K562 (cell line): ENCODE measurements at regions of chr1 and their contacts with region 1.

Region 1: GRCh38 chr1:45011837-45012638 is at the start of gene UROD:
- DNase-seq: peak; percentile 95 to 100 (median 96)
- ATAC-seq: peak; percentile 73
- H3K4me3 ChIP-seq: peak within 1 kb of the TSS; percentile 86
- H3K27ac ChIP-seq: peak within 1 kb of the TSS; percentile 85
- H3K4me1 ChIP-seq: peaks cover 44 to 45% of the 10 kb centered on the region in 2 experiments
- H3K27me3 ChIP-seq: no peaks in the 10 kb centered on the region
- CTCF ChIP-seq: no peak
- EP300 ChIP-seq: peak; percentile 72; the same call in 1 of the 2 replicates
- POLR2A ChIP-seq: peak; percentile 98
- RAD21 ChIP-seq: peak in 1 of 2 experiments; percentile 5; a peak in 1 of 4 replicates
- polyA plus RNA-seq, gene UROD: 2,545 to 2,933 TPM

Region 2: DNA sequence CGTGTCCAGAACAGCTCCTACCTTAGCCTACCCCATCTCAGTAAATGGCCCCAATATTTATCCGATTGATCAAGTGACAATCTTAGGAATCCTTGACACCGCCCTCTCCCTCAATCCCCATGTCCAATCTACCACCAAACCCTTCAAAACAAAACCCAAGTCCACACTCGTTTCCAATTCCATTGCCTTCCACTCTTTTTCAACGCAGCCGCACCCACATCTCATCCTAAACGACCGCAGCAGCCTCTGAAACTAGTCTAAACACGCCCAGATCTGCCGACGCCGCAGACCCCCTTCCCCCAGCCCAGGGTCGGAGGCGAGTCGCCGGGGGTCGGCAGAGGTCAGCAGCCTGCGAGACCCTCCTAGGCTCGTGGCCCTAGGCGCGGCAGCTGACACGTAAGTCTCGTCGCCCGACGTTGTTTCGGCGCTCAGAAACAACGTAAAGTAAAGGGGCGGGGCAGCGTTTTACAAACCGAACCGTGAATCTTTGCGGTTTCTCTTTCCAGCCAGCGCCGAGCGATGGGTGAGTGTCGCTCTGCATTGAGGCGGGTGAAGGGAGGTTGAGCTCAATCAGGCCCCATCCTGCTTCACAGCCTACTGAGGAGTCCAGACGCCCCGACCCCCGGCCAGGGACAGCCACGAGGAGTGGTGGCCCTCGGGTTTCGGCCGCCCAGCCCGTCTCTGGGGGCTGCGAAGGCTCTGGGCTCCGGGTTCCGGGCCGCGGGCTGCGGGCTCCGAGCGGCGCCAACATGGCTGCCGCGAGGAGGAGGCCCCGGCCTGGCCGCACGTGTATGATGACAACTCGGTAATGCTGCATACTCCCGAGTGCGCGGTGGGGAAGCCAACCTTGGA is 236.7 kb before region 1 on chr1 and contains the start of gene RPS8:
- CTCF ChIA-PET with region 1: no interaction called
- POLR2A ChIA-PET with region 1: interaction called, 27 read pairs
- in situ Hi-C with region 1: no loop called
- intact Hi-C with region 1: no loop called
- DNase-seq: peak; percentile 85 to 99 (median 89)
- ATAC-seq: peak; percentile 81
- H3K4me3 ChIP-seq: peak within 1 kb of the TSS; percentile 75
- H3K27ac ChIP-seq: peak within 1 kb of the TSS; percentile 98
- H3K4me1 ChIP-seq: peaks cover 13 to 22% of the 10 kb centered on the region in 2 experiments
- H3K27me3 ChIP-seq: no peaks in the 10 kb centered on the region
- CTCF ChIP-seq: 0 out of 6 replicates have a peak, but pooled peaks of 1 of the 3 experiments have one; percentile 2
- EP300 ChIP-seq: peak; percentile 44; the same call in 1 of the 2 replicates
- POLR2A ChIP-seq: peak; percentile 100
- RAD21 ChIP-seq: no peak
- polyA plus RNA-seq, gene RPS8: 2,431 to 2,562 TPM

Region 3: GRCh38 chr1:44807262-44808062 is 204.6 kb before region 1 on chr1 and contains the start of gene DYNLT4:
- CTCF ChIA-PET with region 1: no interaction called
- POLR2A ChIA-PET with region 1: interaction called, 13 read pairs
- in situ Hi-C with region 1: no loop called
- intact Hi-C with region 1: loop called (anchors 1 kb)
- DNase-seq: peak; percentile 86 to 99 (median 90)
- ATAC-seq: peak; percentile 84
- H3K4me3 ChIP-seq: peak within 1 kb of the TSS; percentile 30; the same call in 1 of the 2 replicates
- H3K27ac ChIP-seq: peak within 1 kb of the TSS; percentile 100
- H3K4me1 ChIP-seq: peaks cover 59 to 72% of the 10 kb centered on the region in 2 experiments
- H3K27me3 ChIP-seq: no peaks in the 10 kb centered on the region
- CTCF ChIP-seq: peak in 1 of 3 experiments; percentile 0; a peak in 1 of 6 replicates
- EP300 ChIP-seq: peak; percentile 71; the same call in 1 of the 2 replicates
- POLR2A ChIP-seq: peak; percentile 88
- RAD21 ChIP-seq: peak; percentile 9 to 20; a peak in 3 of 4 replicates
- polyA plus RNA-seq, gene DYNLT4: not detected

Region 4: GRCh38 chr1:44862829-44863401 is 149.1 kb before region 1 on chr1:
- CTCF ChIA-PET with region 1: no interaction called
- POLR2A ChIA-PET with region 1: no interaction called
- in situ Hi-C with region 1: no loop called
- intact Hi-C with region 1: no loop called
- DNase-seq: peak in 2 of 4 experiments; percentile 58 to 65
- ATAC-seq: peak; percentile 84
- H3K4me3 ChIP-seq: no peak overlapping the region
- H3K27ac ChIP-seq: peak overlapping the region; percentile 45; the same call in 2 of the 3 replicates
- H3K4me1 ChIP-seq: peaks cover 0 to 9% of the 10 kb centered on the region in 2 experiments; a peak in 2 of 5 replicates
- H3K27me3 ChIP-seq: no peaks in the 10 kb centered on the region
- CTCF ChIP-seq: no peak
- EP300 ChIP-seq: no peak
- POLR2A ChIP-seq: no peak
- RAD21 ChIP-seq: no peak

Region 5: DNA sequence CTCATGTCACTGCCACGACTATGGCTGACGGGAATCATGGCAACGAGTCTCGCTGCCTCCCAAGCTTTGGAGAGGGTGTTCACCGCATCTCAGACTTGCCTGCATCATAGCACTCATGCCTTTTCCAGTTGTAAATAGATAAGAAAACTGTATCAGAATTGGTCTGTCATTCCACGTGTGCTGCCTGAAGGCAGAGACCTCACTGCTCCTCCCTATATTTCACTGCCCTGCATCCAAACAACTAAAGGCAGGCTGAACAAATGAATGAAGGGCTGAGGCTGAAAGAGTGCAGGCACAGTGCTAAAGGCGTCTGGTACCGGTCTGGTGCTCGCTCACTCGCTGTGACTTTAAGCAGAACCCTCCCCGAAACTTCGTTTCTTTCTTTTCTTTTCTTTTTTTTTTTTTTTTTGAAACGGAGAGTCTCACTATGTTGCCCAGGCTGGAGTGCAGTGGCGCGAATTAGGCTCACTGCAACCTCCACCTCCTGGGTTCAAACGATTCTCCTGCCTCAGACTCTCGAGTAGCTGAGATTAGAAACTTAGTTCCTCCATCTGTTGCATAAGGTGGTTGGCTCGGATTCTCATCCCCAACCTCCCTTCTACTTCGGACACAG is 26.2 kb before region 1 on chr1:
- CTCF ChIA-PET with region 1: no interaction called
- POLR2A ChIA-PET with region 1: interaction called, 54 read pairs
- in situ Hi-C with region 1: no loop called
- intact Hi-C with region 1: loop called (anchors 1 kb)
- DNase-seq: peak in 3 of 4 experiments; percentile 31 to 57 (median 38)
- ATAC-seq: peak; percentile 35
- H3K4me3 ChIP-seq: peak overlapping the region; percentile 65
- H3K27ac ChIP-seq: peak overlapping the region; percentile 70
- H3K4me1 ChIP-seq: peaks cover 10 to 15% of the 10 kb centered on the region in 2 experiments; a peak in 4 of 5 replicates
- H3K27me3 ChIP-seq: no peaks in the 10 kb centered on the region
- CTCF ChIP-seq: no peak
- EP300 ChIP-seq: no peak
- POLR2A ChIP-seq: no peak
- RAD21 ChIP-seq: 0 out of 4 replicates have a peak, but pooled peaks of 1 of the 2 experiments have one; percentile 4

Region 6: DNA sequence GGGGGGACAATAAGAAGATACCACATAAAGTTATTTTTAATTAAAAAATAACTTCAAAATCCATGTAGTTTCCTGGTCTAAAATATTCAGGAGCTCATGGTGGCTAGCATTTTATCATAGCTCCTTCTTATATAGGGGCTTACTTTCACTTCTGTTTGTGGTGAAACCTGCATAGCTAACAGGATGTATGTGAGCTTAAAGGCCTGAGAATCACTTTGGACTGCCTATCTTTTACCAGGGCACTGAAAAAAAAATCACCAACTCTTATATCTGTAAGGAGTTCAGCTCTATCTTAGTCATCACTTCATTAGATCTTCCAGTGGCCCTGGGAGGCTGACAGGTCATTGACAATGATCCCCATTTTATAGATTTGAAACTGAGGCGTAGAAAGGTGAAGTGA is 21.3 kb after region 1 on chr1:
- CTCF ChIA-PET with region 1: no interaction called
- POLR2A ChIA-PET with region 1: interaction called, 20 read pairs
- in situ Hi-C with region 1: no loop called
- intact Hi-C with region 1: no loop called
- DNase-seq: no peak
- ATAC-seq: no peak
- H3K4me3 ChIP-seq: no peak overlapping the region
- H3K27ac ChIP-seq: no peak overlapping the region
- H3K4me1 ChIP-seq: peaks cover 25 to 27% of the 10 kb centered on the region in 2 experiments
- H3K27me3 ChIP-seq: peaks cover 0 to 10% of the 10 kb centered on the region in 2 experiments; a peak in 2 of 5 replicates
- CTCF ChIP-seq: no peak
- EP300 ChIP-seq: no peak
- POLR2A ChIP-seq: no peak
- RAD21 ChIP-seq: no peak

Region 7: GRCh38 chr1:45122724-45123123 is 110.7 kb after region 1 on chr1:
- CTCF ChIA-PET with region 1: no interaction called
- POLR2A ChIA-PET with region 1: no interaction called
- in situ Hi-C with region 1: no loop called
- intact Hi-C with region 1: no loop called
- DNase-seq: no peak
- ATAC-seq: no peak
- H3K4me3 ChIP-seq: no peak overlapping the region
- H3K27ac ChIP-seq: no peak overlapping the region
- H3K4me1 ChIP-seq: no peaks in the 10 kb centered on the region
- H3K27me3 ChIP-seq: peaks cover 4 to 9% of the 10 kb centered on the region in 2 experiments; a peak in 4 of 5 replicates
- CTCF ChIP-seq: no peak
- EP300 ChIP-seq: no peak
- POLR2A ChIP-seq: no peak
- RAD21 ChIP-seq: no peak

Region 8: GRCh38 chr1:45303582-45304310 is 291.7 kb after region 1 on chr1:
- CTCF ChIA-PET with region 1: interaction called, 58 read pairs
- POLR2A ChIA-PET with region 1: interaction called, 113 read pairs
- in situ Hi-C with region 1: loop called (anchors 5 kb)
- intact Hi-C with region 1: loop called (anchors 1 kb)
- DNase-seq: peak; percentile 99
- ATAC-seq: peak; percentile 93
- H3K4me3 ChIP-seq: peak overlapping the region; percentile 52
- H3K27ac ChIP-seq: peak overlapping the region; percentile 88
- H3K4me1 ChIP-seq: peaks cover 24% of the 10 kb centered on the region in 2 experiments
- H3K27me3 ChIP-seq: no peaks in the 10 kb centered on the region
- CTCF ChIP-seq: peak; percentile 95 to 99 (median 95)
- EP300 ChIP-seq: peak; percentile 31; the same call in 1 of the 2 replicates
- POLR2A ChIP-seq: peak; percentile 97
- RAD21 ChIP-seq: peak; percentile 93 to 94

Region 9: GRCh38 chr1:45569962-45570581 is 558.0 kb after region 1 on chr1:
- CTCF ChIA-PET with region 1: interaction called, 4 read pairs
- POLR2A ChIA-PET with region 1: interaction called, 3 read pairs
- in situ Hi-C with region 1: no loop called
- intact Hi-C with region 1: loop called (anchors 10 kb)
- DNase-seq: peak; percentile 67 to 86 (median 74)
- ATAC-seq: peak; percentile 87
- H3K4me3 ChIP-seq: no peak overlapping the region
- H3K27ac ChIP-seq: no peak overlapping the region
- H3K4me1 ChIP-seq: peaks cover 11 to 22% of the 10 kb centered on the region in 2 experiments
- H3K27me3 ChIP-seq: no peaks in the 10 kb centered on the region
- CTCF ChIP-seq: peak; percentile 95 to 99 (median 98)
- EP300 ChIP-seq: 0 out of 2 replicates have a peak, but pooled peaks have one; percentile 8
- POLR2A ChIP-seq: no peak
- RAD21 ChIP-seq: peak; percentile 94 to 97